ENCODE measurements at regions of chr20 and their contacts with region 1.

Region 1: GRCh38 chr20:21235484-21236445 is 67.4 kb upstream of the XRN2 start:
- DNase-seq: peak; percentile 75
- H3K4me3 Mint-ChIP-seq: no peak overlapping the region
- H3K27ac Mint-ChIP-seq: no peak overlapping the region
- H3K4me1 Mint-ChIP-seq: peaks cover 3% of the 10 kb centered on the region
- H3K27me3 Mint-ChIP-seq: no peaks in the 10 kb centered on the region

Region 2: GRCh38 chr20:20837574-20838021 is 398.2 kb before region 1 on chr20:
- CTCF ChIA-PET with region 1: no interaction called
- POLR2A ChIA-PET with region 1: no interaction called
- intact Hi-C with region 1: loop called (anchors 10 kb)
- DNase-seq: peak; percentile 58
- H3K4me3 Mint-ChIP-seq: no peak overlapping the region
- H3K27ac Mint-ChIP-seq: no peak overlapping the region
- H3K4me1 Mint-ChIP-seq: no peaks in the 10 kb centered on the region
- H3K27me3 Mint-ChIP-seq: peaks cover 10% of the 10 kb centered on the region

Region 3: DNA sequence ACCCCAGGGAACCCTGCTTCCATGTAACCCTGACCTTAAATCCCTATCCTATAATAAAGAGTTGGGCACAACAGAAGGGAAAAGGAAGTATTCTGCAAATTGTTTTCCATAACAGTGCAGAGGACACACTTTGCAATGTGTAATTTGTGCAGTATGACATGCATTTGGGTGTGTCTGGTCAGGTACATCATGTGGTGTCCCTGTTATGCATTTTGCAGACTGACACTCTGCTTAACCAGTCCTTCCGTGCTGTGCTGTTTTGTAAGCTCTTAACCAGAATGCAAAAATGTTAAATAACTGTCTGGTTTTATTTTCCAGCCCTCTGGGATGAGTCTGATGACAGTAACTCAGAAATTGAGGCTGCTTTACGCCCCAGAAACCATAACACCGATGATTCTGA is 10.4 kb after region 1 on chr20:
- CTCF ChIA-PET with region 1: interaction called, 19 read pairs
- POLR2A ChIA-PET with region 1: no interaction called
- intact Hi-C with region 1: no loop called
- DNase-seq: no peak
- H3K4me3 Mint-ChIP-seq: no peak overlapping the region
- H3K27ac Mint-ChIP-seq: no peak overlapping the region
- H3K4me1 Mint-ChIP-seq: peaks cover 4% of the 10 kb centered on the region
- H3K27me3 Mint-ChIP-seq: no peaks in the 10 kb centered on the region

Region 4: GRCh38 chr20:21352703-21353102 is 116.9 kb after region 1 on chr20:
- CTCF ChIA-PET with region 1: interaction called, 16 read pairs
- POLR2A ChIA-PET with region 1: no interaction called
- intact Hi-C with region 1: no loop called
- DNase-seq: no peak
- H3K4me3 Mint-ChIP-seq: no peak overlapping the region
- H3K27ac Mint-ChIP-seq: no peak overlapping the region
- H3K4me1 Mint-ChIP-seq: no peaks in the 10 kb centered on the region
- H3K27me3 Mint-ChIP-seq: no peaks in the 10 kb centered on the region

Region 5: GRCh38 chr20:21505161-21505809 is 269.5 kb after region 1 on chr20:
- CTCF ChIA-PET with region 1: interaction called, 319 read pairs
- POLR2A ChIA-PET with region 1: interaction called, 3 read pairs
- intact Hi-C with region 1: loop called (anchors 1 kb)
- DNase-seq: peak; percentile 85
- H3K4me3 Mint-ChIP-seq: peak overlapping the region; percentile 57
- H3K27ac Mint-ChIP-seq: no peak overlapping the region
- H3K4me1 Mint-ChIP-seq: peaks cover 32% of the 10 kb centered on the region
- H3K27me3 Mint-ChIP-seq: peaks cover 49% of the 10 kb centered on the region

Region 6: GRCh38 chr20:21571841-21572690 is 336.3 kb after region 1 on chr20:
- CTCF ChIA-PET with region 1: interaction called, 26 read pairs
- POLR2A ChIA-PET with region 1: no interaction called
- intact Hi-C with region 1: loop called (anchors 5 kb)
- DNase-seq: peak; percentile 27
- H3K4me3 Mint-ChIP-seq: no peak overlapping the region
- H3K27ac Mint-ChIP-seq: no peak overlapping the region
- H3K4me1 Mint-ChIP-seq: peaks cover 11% of the 10 kb centered on the region
- H3K27me3 Mint-ChIP-seq: peaks cover 11% of the 10 kb centered on the region

Region 7: DNA sequence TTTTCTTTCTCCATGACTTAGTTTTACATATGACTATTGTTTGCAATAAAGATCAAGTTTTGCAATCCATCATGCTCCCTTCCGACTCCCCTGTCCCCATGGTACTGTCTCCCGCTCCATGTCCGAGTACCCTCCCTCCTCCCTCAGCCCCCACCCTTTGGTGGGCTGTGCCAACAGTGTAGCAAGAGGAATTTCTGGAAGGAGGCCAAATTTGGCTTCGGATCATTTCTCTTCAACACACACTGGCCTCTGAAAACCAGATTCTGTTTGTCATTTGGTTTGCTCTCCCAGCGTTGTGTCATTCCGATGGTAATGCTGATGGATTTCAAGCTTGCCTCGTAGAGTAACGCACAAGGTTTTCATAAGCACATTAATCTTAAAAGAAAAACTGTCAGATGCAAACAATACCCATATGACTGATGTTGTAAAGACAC is 446.8 kb after region 1 on chr20:
- CTCF ChIA-PET with region 1: no interaction called
- POLR2A ChIA-PET with region 1: no interaction called
- intact Hi-C with region 1: no loop called
- DNase-seq: no peak
- H3K4me3 Mint-ChIP-seq: no peak overlapping the region
- H3K27ac Mint-ChIP-seq: no peak overlapping the region
- H3K4me1 Mint-ChIP-seq: no peaks in the 10 kb centered on the region
- H3K27me3 Mint-ChIP-seq: no peaks in the 10 kb centered on the region